Vagina (tissue), 2 donors: ENCODE measurements at regions of chr22 and their contacts with region 1.

Region 1: GRCh38 chr22:36123673-36124630 is 36.6 kb downstream of the APOL3 start:
- DNase-seq: peak in 1 of 2 donors; percentile 98
- H3K4me3 ChIP-seq: peak overlapping the region; percentile 20 to 38
- H3K27ac ChIP-seq: peak overlapping the region; percentile 84
- H3K4me1 ChIP-seq: no peaks in the 10 kb centered on the region
- H3K27me3 ChIP-seq: no peaks in the 10 kb centered on the region
- CTCF ChIP-seq: peak; percentile 89 to 99 (median 97)
- POLR2A ChIP-seq: no peak

Region 2: GRCh38 chr22:35627264-35628041 is 496.5 kb before region 1 on chr22:
- intact Hi-C with region 1: loop called (anchors 10 kb)
- DNase-seq: peak in 1 of 2 donors; percentile 92
- H3K4me3 ChIP-seq: peak overlapping the region; percentile 53 to 60
- H3K27ac ChIP-seq: peak overlapping the region; percentile 88
- H3K4me1 ChIP-seq: peaks cover 39% of the 10 kb centered on the region
- H3K27me3 ChIP-seq: no peaks in the 10 kb centered on the region
- CTCF ChIP-seq: peak in 1 of 3 experiments; percentile 34
- POLR2A ChIP-seq: peak in 1 of 2 donors; percentile 15

Region 3: DNA sequence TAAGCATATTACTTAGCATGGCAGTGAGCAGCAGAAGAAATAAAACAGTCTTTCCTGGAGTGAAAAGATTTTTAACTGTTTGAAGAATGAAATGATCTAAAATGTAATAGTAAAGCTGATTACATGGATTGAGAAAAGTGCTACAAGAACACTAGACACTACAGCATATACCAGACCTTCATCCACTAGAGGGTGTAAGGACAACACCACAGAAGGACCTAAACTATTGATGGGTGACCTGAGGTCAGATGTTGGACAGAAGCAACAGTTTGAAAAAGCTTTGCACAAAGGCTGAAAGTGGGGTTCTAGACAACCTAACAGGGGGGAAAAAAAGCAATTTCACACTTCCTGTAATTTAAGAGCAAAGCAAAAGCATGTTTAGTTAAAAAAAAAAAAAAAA is 193.0 kb before region 1 on chr22:
- intact Hi-C with region 1: loop called (anchors 5 kb)
- DNase-seq: no peak
- H3K4me3 ChIP-seq: no peak overlapping the region
- H3K27ac ChIP-seq: no peak overlapping the region
- H3K4me1 ChIP-seq: peaks cover 9% of the 10 kb centered on the region
- H3K27me3 ChIP-seq: no peaks in the 10 kb centered on the region
- CTCF ChIP-seq: peak; percentile 30 to 74 (median 33)
- POLR2A ChIP-seq: no peak

Region 4: DNA sequence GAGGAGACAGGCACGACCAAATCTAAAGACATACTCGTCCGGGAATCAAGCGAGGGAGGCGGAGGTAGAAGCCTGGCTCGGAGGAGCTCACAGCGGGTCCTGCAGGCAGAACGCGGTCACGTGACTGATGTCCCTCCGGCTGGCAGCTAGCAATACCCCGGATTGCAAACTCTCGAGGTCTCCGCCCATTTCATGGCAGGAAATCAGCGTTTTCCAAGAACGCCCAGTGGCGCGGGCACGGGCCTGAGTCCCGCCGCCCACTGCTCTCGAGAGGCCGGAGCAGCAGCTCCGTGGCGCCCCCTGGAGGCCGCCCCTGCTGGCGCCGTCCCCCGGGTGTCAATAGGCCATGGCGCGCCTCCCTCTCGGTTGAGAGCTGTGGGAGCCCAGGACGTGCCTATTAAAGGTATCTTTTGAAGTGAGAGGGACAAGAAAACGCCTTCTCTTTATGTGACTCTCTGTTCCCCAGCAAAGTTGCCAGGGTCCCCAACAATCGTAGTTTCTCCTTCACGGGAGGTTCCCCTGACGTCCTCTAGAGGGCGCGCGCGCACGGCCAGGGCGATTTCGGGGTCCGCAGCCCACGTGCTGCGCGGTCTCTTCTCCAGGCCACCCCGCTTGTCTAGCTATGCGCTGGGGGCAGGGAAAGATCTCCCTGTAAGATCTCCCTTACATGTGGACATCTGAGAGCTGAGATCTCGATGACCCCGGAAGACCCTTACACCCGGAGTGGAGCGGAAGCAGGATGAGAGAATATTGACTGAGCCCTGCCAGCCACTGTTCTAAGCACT is 58.0 kb before region 1 on chr22:
- intact Hi-C with region 1: loop called (anchors 5 kb)
- DNase-seq: peak in 1 of 2 donors; percentile 93
- H3K4me3 ChIP-seq: peak overlapping the region; percentile 44 to 59
- H3K27ac ChIP-seq: peak overlapping the region; percentile 91
- H3K4me1 ChIP-seq: no peaks in the 10 kb centered on the region
- H3K27me3 ChIP-seq: no peaks in the 10 kb centered on the region
- CTCF ChIP-seq: peak; percentile 98 to 100 (median 99)
- POLR2A ChIP-seq: no peak

Region 5: GRCh38 chr22:36175892-36176291 is 51.9 kb after region 1 on chr22:
- intact Hi-C with region 1: no loop called
- DNase-seq: no peak
- H3K4me3 ChIP-seq: no peak overlapping the region
- H3K27ac ChIP-seq: no peak overlapping the region
- H3K4me1 ChIP-seq: no peaks in the 10 kb centered on the region
- H3K27me3 ChIP-seq: no peaks in the 10 kb centered on the region
- CTCF ChIP-seq: no peak
- POLR2A ChIP-seq: no peak

Region 6: DNA sequence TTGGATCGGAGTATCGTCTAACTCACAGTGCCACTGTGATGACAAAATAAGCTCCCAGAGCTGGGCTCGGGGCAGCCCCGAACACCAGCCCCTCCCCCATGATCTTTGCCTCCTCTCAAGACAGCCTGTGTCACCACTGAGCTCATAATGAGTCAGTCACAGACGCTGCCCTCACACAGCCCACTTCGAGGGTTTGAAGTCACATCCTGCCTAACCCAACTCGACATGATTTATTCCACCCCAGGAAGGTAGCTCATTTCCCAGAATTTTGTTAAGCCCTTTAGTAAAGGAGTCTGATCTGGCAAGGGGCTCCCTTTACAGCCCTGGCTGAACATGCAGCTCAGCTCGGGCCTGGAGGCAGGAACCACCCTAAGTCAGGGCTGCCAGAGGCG is 241.1 kb after region 1 on chr22:
- intact Hi-C with region 1: no loop called
- DNase-seq: no peak
- H3K4me3 ChIP-seq: no peak overlapping the region
- H3K27ac ChIP-seq: peak overlapping the region; percentile 93
- H3K4me1 ChIP-seq: peaks cover 100% of the 10 kb centered on the region
- H3K27me3 ChIP-seq: no peaks in the 10 kb centered on the region
- CTCF ChIP-seq: no peak
- POLR2A ChIP-seq: no peak